HEK293T (cell line): ENCODE measurements at regions of chr1 and their contacts with region 1.

Region 1: DNA sequence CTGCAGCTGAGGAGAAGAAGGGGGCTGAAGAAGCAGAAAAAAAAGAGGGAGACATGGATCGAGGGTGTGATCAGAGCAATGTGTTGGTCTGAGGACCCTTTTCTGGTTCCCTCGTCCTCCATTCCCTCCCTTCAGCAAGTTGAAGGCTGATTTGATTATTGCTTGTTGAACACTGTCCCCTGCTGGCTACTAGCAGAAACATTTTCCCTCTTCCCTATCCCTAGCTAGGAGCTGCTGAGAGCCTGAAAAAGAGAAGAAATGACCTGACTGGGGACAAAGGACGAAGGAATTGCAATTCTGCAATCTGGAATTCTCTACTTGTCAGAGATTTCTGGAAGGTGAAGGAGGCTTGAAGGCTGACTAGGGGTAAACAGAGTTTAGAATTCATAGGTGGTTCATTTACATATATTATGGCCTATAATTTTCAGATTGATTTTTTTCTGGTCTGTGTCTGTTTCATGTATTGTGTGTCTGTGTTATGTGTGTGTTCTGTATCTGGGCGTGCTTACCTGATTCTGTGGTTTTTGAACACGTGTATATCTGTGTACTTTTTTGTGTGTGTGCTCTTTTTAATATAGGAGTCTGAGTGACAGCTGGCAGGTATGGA is 9.8 kb downstream of the NHLH1 start:
- DNase-seq: peak; percentile 78

Region 2: GRCh38 chr1:160330129-160330528 is 46.5 kb before region 1 on chr1:
- CTCF ChIA-PET with region 1: no interaction called
- POLR2A ChIA-PET with region 1: no interaction called
- DNase-seq: no peak

Region 3: DNA sequence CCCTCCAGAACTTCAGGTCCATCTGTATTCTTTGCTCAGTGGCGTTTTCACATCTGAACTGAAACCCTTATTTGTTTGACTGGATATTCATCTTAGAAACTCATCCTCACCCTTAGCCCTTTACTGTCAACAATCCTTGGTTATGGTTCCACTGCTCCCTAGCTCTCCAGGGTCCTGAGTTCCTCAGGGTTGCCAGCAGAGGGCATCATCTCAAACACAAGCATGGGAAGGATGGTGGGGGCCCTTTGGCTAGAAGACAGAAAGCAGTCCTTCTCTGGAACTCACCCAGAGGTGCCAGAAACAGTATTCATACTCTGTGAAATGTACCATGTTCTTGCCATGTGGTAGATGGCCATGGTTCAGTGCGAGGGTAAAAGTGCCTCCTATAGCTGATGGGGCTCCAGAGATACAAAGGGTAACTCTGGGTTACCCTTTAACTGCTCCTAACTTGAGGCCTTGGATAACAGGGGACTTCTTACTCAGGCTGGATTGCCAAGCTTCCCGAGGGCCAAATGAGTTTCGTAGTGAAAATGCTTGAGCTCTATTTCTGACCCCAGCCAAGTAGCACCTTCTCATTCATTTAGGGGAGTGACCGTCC is 22.1 kb before region 1 on chr1:
- CTCF ChIA-PET with region 1: interaction called, 45 read pairs
- POLR2A ChIA-PET with region 1: interaction called, 3 read pairs
- DNase-seq: peak; percentile 70

Region 4: GRCh38 chr1:160362168-160362957 is 14.3 kb before region 1 on chr1:
- CTCF ChIA-PET with region 1: interaction called, 20 read pairs
- POLR2A ChIA-PET with region 1: interaction called, 5 read pairs
- DNase-seq: no peak